Activated T-helper 1 cell treated with anti-CD3 and anti-CD28 coated beads, Interleukin-12 subunit alpha, Interleukin-12 subunit beta, Interleukin-2, Interleukin-4 antibody, amounts not matched to agents 30 ng/mL and 10 ng/mL and 1 ng/mL, durations not matched to agents 14 hours and 24 hours and 36 hours (primary cell): ENCODE measurements at regions of chr1 and their contacts with region 1.

Region 1: DNA sequence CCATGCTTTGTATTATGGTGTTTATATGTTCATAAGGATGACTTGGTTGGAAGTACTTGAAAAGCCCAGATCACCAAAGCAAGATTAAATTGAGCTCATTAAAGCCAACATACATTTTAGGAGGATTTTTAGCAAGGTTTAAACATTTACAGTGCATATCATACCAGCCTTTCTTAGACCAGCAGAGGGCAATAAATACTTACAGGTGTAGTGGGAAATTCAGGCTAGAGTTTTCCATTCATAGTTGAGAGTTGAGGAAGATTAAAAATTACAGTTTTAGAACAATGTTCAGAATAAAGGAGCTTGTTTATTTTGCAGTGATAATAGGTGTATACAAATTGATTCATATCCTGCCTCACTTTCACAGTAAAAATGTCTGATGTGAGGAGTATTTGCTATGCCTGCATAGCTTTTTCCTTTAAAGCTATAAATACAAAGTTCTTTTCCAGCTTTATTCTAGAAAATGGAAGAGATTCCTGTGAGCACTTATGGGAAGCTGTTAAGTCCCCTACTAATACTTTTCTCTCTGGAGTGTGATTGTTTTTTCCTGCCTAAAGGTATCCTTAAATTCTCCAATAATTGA is 35.3 kb downstream of the DTL start:
- DNase-seq: no peak
- H3K4me3 Mint-ChIP-seq: no peak overlapping the region
- H3K27ac Mint-ChIP-seq: no peak overlapping the region
- H3K4me1 Mint-ChIP-seq: peaks cover 6% of the 10 kb centered on the region
- H3K27me3 Mint-ChIP-seq: no peaks in the 10 kb centered on the region

Region 2: GRCh38 chr1:212162635-212163034 is 91.8 kb after region 1 on chr1:
- intact Hi-C with region 1: loop called (anchors 2 kb)
- DNase-seq: peak; percentile 20
- H3K4me3 Mint-ChIP-seq: peak overlapping the region; percentile 41
- H3K27ac Mint-ChIP-seq: peak overlapping the region; percentile 78
- H3K4me1 Mint-ChIP-seq: peaks cover 35% of the 10 kb centered on the region
- H3K27me3 Mint-ChIP-seq: no peaks in the 10 kb centered on the region

Region 3: DNA sequence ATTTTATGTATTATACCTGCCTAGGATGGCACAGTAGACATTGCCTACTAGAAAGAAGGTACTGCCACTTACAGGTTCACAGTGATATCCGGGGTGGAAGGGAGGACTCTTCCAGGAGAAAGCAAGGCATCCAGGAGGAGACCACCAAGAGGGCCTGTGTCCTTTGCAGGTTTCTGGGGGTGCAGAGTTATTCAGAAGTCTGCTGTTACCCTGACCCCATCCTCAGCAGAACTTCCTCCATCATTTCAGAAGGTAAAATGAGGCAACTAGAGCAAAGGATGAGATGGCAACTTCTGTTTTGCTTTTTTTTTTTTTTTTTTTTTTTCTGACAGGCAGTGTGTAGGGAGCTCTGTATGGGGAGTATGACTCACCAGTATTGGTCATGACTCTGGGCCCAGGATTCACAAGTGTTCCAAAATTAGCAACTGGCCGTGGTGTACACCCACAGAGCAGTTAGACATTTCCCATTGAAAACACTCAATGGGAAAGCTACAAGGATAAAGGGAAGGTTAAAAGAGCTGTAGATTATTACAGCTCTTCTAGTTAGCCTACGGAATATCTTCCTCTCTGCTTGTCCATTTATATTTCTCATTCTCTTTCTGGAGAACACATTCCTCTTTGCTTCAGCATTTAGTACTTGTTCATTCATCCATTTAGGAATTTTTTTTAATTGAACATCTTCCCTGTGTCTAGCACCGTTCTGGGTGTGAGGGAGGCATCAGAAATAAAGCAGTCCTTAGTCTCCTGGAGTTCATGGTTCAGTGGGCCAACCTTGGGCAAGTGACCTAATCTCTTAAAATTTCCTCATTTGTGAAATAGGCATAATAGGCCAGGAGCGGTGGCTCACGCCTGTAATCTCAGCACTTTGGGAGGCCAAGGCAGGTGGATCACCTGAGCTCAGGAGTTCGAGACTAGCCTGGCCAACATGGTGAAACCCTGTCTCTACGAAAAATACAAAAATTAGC is 163.9 kb after region 1 on chr1:
- intact Hi-C with region 1: loop called (anchors 5 kb)
- DNase-seq: no peak
- H3K4me3 Mint-ChIP-seq: peak overlapping the region; percentile 57
- H3K27ac Mint-ChIP-seq: peak overlapping the region; percentile 67
- H3K4me1 Mint-ChIP-seq: peaks cover 72% of the 10 kb centered on the region
- H3K27me3 Mint-ChIP-seq: no peaks in the 10 kb centered on the region

Region 4: GRCh38 chr1:212291505-212292134 is 220.8 kb after region 1 on chr1:
- intact Hi-C with region 1: loop called (anchors 1 kb)
- DNase-seq: no peak
- H3K4me3 Mint-ChIP-seq: peak overlapping the region; percentile 2
- H3K27ac Mint-ChIP-seq: peak overlapping the region; percentile 67
- H3K4me1 Mint-ChIP-seq: peaks cover 88% of the 10 kb centered on the region
- H3K27me3 Mint-ChIP-seq: peaks cover 2% of the 10 kb centered on the region

Region 5: DNA sequence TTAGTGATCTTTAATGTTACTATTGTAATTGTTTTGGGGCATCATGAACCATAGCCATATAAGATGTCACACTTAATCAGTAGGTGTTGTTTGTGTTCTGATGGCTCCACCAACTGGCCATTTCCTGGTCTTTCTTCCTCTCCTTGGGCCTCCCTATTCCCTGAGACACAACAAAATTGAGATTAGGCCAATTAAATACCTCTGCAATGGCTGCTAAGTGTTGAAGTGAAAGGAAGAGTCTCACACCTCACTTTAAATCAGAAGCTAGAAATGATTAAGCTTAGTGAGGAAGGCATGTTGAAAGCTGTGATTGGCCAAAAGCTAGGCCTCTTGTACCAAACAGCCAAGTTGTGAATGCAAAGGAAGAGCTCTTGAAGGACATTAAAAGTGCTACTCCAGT is 245.1 kb after region 1 on chr1:
- intact Hi-C with region 1: loop called (anchors 1 kb)
- DNase-seq: no peak
- H3K4me3 Mint-ChIP-seq: no peak overlapping the region
- H3K27ac Mint-ChIP-seq: no peak overlapping the region
- H3K4me1 Mint-ChIP-seq: peaks cover 24% of the 10 kb centered on the region
- H3K27me3 Mint-ChIP-seq: no peaks in the 10 kb centered on the region

Region 6: GRCh38 chr1:212368073-212368484 is 297.3 kb after region 1 on chr1:
- intact Hi-C with region 1: loop called (anchors 1 kb)
- DNase-seq: peak; percentile 48
- H3K4me3 Mint-ChIP-seq: no peak overlapping the region
- H3K27ac Mint-ChIP-seq: no peak overlapping the region
- H3K4me1 Mint-ChIP-seq: no peaks in the 10 kb centered on the region
- H3K27me3 Mint-ChIP-seq: no peaks in the 10 kb centered on the region